Activated CD4-positive, alpha-beta T cell treated with anti-CD3 and anti-CD28 coated beads, Interleukin-2, amount 10 ng/mL, durations not matched to agents 24 days and 14 days (primary cell): ENCODE measurements at regions of chr5 and their contacts with region 1.

Region 1: GRCh38 chr5:87412630-87413342 is at the start of gene CCNH:
- DNase-seq: peak; percentile 99
- H3K4me3 Mint-ChIP-seq: peak within 1 kb of the TSS; percentile 96
- H3K27ac Mint-ChIP-seq: peak within 1 kb of the TSS; percentile 94
- H3K4me1 Mint-ChIP-seq: peaks cover 31% of the 10 kb centered on the region
- H3K27me3 Mint-ChIP-seq: peaks cover 8% of the 10 kb centered on the region
- total RNA-seq, gene CCNH: 67.2 and 75.6 TPM in 2 replicates

Region 2: GRCh38 chr5:86617756-86618576 is 794.8 kb before region 1 on chr5 and contains the start of gene COX7C:
- intact Hi-C with region 1: loop called (anchors 1 kb)
- DNase-seq: peak; percentile 98
- H3K4me3 Mint-ChIP-seq: peak within 1 kb of the TSS; percentile 100
- H3K27ac Mint-ChIP-seq: peak within 1 kb of the TSS; percentile 99
- H3K4me1 Mint-ChIP-seq: peaks cover 16% of the 10 kb centered on the region
- H3K27me3 Mint-ChIP-seq: peaks cover 7% of the 10 kb centered on the region
- total RNA-seq, gene COX7C: 471 and 481 TPM in 2 replicates

Region 3: GRCh38 chr5:87074934-87075541 is 337.7 kb before region 1 on chr5:
- intact Hi-C with region 1: loop called (anchors 5 kb)
- DNase-seq: peak; percentile 80
- H3K4me3 Mint-ChIP-seq: peak overlapping the region; percentile 57
- H3K27ac Mint-ChIP-seq: peak overlapping the region; percentile 83
- H3K4me1 Mint-ChIP-seq: peaks cover 31% of the 10 kb centered on the region
- H3K27me3 Mint-ChIP-seq: no peaks in the 10 kb centered on the region